Activated naive CD8-positive, alpha-beta T cell treated with anti-CD3 and anti-CD28 coated beads, Interleukin-2, amount 10 ng/mL, durations not matched to agents 7 days and 5 days (primary cell): ENCODE measurements at regions of chr6 and their contacts with region 1.

Region 1: GRCh38 chr6:19968201-19968600 is 131.0 kb downstream of the ID4 start:
- DNase-seq: no peak
- ATAC-seq: no peak
- H3K4me3 Mint-ChIP-seq: no peak overlapping the region
- H3K27ac Mint-ChIP-seq: no peak overlapping the region
- H3K4me1 Mint-ChIP-seq: no peaks in the 10 kb centered on the region
- H3K27me3 Mint-ChIP-seq: no peaks in the 10 kb centered on the region

Region 2: GRCh38 chr6:20497216-20498040 is 529.2 kb after region 1 on chr6:
- POLR2A ChIA-PET with region 1: interaction called, 12 read pairs
- DNase-seq: no peak
- ATAC-seq: no peak
- H3K4me3 Mint-ChIP-seq: no peak overlapping the region
- H3K27ac Mint-ChIP-seq: no peak overlapping the region
- H3K4me1 Mint-ChIP-seq: no peaks in the 10 kb centered on the region
- H3K27me3 Mint-ChIP-seq: peaks cover 3% of the 10 kb centered on the region